ENCODE measurements at regions of chr6 and their contacts with region 1.

Region 1: GRCh38 chr6:92647625-92648024 is 771.7 kb downstream of the EPHA7 start:
- DNase-seq: no peak
- H3K4me3 ChIP-seq: no peak overlapping the region
- H3K4me3 Mint-ChIP-seq: no peak overlapping the region
- H3K27ac Mint-ChIP-seq: no peak overlapping the region
- H3K4me1 ChIP-seq: no peaks in the 10 kb centered on the region
- H3K4me1 Mint-ChIP-seq: no peaks in the 10 kb centered on the region
- H3K27me3 ChIP-seq: no peaks in the 10 kb centered on the region
- H3K27me3 Mint-ChIP-seq: no peaks in the 10 kb centered on the region
- CTCF ChIP-seq: no peak

Region 2: DNA sequence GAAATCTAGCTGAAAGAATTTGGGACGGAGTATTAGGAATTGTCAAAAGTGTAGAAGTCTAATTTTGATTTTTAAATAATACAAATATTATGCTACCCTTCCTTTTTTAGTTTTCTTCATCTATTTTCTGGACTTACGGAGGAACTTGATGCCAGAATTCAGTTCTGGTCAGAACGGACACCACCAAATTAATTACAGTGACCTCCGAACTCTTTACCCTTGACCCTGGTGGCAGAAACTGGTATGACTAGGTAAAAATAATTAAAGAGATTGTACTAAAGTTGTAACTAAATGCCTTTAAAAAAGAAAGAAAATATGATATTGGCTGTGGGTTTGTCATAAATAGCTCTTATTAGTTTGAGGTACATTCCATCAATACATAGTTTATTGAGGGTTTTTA is 1309.7 kb before region 1 on chr6:
- CTCF ChIA-PET with region 1: no interaction called
- POLR2A ChIA-PET with region 1: no interaction called
- intact Hi-C with region 1: loop called (anchors 10 kb)
- DNase-seq: no peak
- H3K4me3 ChIP-seq: no peak overlapping the region
- H3K4me3 Mint-ChIP-seq: no peak overlapping the region
- H3K27ac Mint-ChIP-seq: no peak overlapping the region
- H3K4me1 ChIP-seq: no peaks in the 10 kb centered on the region
- H3K4me1 Mint-ChIP-seq: no peaks in the 10 kb centered on the region
- H3K27me3 ChIP-seq: no peaks in the 10 kb centered on the region
- H3K27me3 Mint-ChIP-seq: peaks cover 3% of the 10 kb centered on the region
- CTCF ChIP-seq: peak; percentile 11 to 29

Region 3: GRCh38 chr6:92415649-92416048 is 232.0 kb before region 1 on chr6:
- CTCF ChIA-PET with region 1: no interaction called
- POLR2A ChIA-PET with region 1: no interaction called
- intact Hi-C with region 1: no loop called
- DNase-seq: no peak
- H3K4me3 ChIP-seq: no peak overlapping the region
- H3K4me3 Mint-ChIP-seq: no peak overlapping the region
- H3K27ac Mint-ChIP-seq: no peak overlapping the region
- H3K4me1 ChIP-seq: no peaks in the 10 kb centered on the region
- H3K4me1 Mint-ChIP-seq: no peaks in the 10 kb centered on the region
- H3K27me3 ChIP-seq: no peaks in the 10 kb centered on the region
- H3K27me3 Mint-ChIP-seq: no peaks in the 10 kb centered on the region
- CTCF ChIP-seq: no peak

Region 4: GRCh38 chr6:92723390-92723931 is 75.8 kb after region 1 on chr6:
- CTCF ChIA-PET with region 1: no interaction called
- POLR2A ChIA-PET with region 1: no interaction called
- intact Hi-C with region 1: no loop called
- DNase-seq: no peak
- H3K4me3 ChIP-seq: no peak overlapping the region
- H3K4me3 Mint-ChIP-seq: no peak overlapping the region
- H3K27ac Mint-ChIP-seq: no peak overlapping the region
- H3K4me1 ChIP-seq: no peaks in the 10 kb centered on the region
- H3K4me1 Mint-ChIP-seq: no peaks in the 10 kb centered on the region
- H3K27me3 ChIP-seq: no peaks in the 10 kb centered on the region
- H3K27me3 Mint-ChIP-seq: no peaks in the 10 kb centered on the region
- CTCF ChIP-seq: no peak

Region 5: GRCh38 chr6:92748131-92748530 is 100.5 kb after region 1 on chr6:
- CTCF ChIA-PET with region 1: no interaction called
- POLR2A ChIA-PET with region 1: no interaction called
- intact Hi-C with region 1: no loop called
- DNase-seq: no peak
- H3K4me3 ChIP-seq: no peak overlapping the region
- H3K4me3 Mint-ChIP-seq: no peak overlapping the region
- H3K27ac Mint-ChIP-seq: no peak overlapping the region
- H3K4me1 ChIP-seq: no peaks in the 10 kb centered on the region
- H3K4me1 Mint-ChIP-seq: no peaks in the 10 kb centered on the region
- H3K27me3 ChIP-seq: no peaks in the 10 kb centered on the region
- H3K27me3 Mint-ChIP-seq: peaks cover 3% of the 10 kb centered on the region
- CTCF ChIP-seq: no peak